GM10248 (cell line): ENCODE measurements at regions of chr3 and their contacts with region 1.

Region 1: GRCh38 chr3:52220380-52221026 is 4.9 kb downstream of the TLR9 start:
- DNase-seq: peak; percentile 85
- CTCF ChIP-seq: peak; percentile 97

Region 2: DNA sequence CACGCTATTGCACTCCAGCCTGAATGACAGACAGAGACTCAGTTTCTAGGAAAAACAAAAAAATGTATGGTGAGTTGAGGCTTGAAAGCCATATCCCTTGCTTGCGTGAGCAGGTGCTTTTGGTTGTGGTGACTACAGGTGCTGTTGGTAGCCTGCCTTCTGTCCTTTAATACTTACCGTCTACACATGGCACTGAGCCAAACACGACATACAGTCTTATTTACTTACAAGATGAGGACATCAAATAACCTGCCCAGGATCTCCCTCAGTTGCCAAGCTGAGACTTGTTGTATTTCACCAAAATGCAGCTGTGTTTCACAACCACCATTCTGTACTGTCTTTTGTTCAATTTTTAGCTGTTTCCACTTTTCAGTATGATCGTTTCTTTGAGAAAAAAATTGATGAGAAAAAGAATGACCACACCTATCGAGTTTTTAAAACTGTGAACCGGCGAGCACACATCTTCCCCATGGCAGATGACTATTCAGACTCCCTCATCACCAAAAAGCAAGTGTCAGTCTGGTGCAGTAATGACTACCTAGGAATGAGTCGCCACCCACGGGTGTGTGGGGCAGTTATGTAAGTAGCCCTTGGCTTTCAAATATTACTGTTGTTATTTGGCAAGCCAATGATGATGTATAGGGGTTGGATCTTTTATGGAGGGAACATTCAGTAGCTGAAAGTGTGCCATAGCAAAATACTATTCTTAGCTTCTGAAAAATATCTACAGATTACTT is 16.0 kb before region 1 on chr3:
- CTCF ChIA-PET with region 1: interaction called, 172 read pairs
- POLR2A ChIA-PET with region 1: no interaction called
- DNase-seq: no peak
- CTCF ChIP-seq: no peak

Region 3: DNA sequence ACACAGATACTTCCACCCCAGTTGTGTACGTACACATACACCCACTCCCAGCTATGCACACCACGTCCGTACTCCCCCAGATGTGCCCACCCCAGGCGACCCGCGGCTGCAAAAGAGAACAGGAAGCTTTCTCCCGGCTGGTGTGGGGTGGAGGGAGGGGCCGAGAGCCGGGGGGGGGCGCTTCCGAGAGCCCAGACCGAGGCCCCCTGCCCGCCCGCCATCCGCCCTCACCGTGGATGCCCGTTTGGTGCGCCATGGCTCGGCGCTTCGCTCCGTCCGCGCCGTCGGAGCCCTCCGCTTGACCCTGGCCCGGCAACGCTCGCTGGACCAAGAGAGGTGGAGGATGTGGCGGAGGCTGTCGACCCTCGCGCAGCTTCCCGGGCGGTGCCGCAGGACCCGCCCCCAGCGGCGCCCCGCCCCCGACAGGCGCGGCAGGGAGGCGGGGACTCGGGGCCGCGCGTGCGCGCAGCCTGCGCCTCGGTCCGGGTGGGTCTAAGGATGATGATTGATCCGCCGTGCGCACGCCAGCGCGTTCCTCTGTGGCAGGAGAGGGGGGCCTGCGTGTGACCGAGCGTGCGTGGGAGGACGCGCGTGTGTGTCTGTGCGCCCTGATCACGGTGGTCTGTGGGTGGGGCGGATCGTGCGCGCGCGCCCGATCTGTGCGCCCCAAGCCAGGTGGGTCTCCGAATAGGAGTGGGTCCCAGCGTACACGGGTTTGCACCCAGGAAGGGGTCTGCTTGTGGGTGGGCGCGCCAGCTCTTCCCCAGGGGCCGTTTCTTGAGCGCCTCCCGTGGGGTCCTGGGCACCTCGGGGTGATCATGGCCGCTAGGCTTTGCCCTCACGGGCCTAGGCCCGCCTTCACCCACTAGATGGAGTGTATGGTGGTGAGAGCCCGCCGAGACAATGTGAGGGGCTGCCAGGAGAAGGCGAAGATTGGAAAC is 18.5 kb after region 1 on chr3 and contains the start of gene TWF2:
- CTCF ChIA-PET with region 1: interaction called, 50 read pairs
- POLR2A ChIA-PET with region 1: no interaction called
- DNase-seq: peak; percentile 97
- CTCF ChIP-seq: peak; percentile 44

Region 4: GRCh38 chr3:52253314-52254304 is 33.1 kb after region 1 on chr3:
- CTCF ChIA-PET with region 1: interaction called, 22 read pairs
- POLR2A ChIA-PET with region 1: no interaction called
- DNase-seq: peak; percentile 91
- CTCF ChIP-seq: no peak

Region 5: DNA sequence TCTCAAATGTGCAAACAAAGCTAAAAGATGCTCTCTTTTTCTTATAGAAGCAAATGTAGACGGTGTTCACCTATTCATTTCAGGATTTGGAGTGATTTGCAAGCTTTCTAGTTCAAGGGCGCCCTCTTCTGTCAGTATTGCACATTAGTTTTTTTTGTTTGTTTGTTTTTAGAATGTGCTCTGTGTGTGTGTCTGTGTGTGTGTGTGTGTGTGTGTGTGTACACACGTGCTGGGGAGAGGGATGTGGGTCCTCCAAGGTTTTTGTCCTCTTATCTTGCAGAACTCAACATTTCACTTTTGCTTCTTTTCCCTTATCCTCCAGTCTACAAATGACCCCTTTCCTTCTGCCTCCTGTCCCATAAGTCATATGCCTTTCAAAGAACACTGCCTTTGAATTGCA is 119.1 kb after region 1 on chr3:
- CTCF ChIA-PET with region 1: interaction called, 140 read pairs
- POLR2A ChIA-PET with region 1: no interaction called
- DNase-seq: peak; percentile 70
- CTCF ChIP-seq: peak; percentile 62

Region 6: GRCh38 chr3:52385157-52385556 is 164.7 kb after region 1 on chr3:
- CTCF ChIA-PET with region 1: interaction called, 10 read pairs
- POLR2A ChIA-PET with region 1: no interaction called
- DNase-seq: peak; percentile 75
- CTCF ChIP-seq: peak; percentile 50

Region 7: DNA sequence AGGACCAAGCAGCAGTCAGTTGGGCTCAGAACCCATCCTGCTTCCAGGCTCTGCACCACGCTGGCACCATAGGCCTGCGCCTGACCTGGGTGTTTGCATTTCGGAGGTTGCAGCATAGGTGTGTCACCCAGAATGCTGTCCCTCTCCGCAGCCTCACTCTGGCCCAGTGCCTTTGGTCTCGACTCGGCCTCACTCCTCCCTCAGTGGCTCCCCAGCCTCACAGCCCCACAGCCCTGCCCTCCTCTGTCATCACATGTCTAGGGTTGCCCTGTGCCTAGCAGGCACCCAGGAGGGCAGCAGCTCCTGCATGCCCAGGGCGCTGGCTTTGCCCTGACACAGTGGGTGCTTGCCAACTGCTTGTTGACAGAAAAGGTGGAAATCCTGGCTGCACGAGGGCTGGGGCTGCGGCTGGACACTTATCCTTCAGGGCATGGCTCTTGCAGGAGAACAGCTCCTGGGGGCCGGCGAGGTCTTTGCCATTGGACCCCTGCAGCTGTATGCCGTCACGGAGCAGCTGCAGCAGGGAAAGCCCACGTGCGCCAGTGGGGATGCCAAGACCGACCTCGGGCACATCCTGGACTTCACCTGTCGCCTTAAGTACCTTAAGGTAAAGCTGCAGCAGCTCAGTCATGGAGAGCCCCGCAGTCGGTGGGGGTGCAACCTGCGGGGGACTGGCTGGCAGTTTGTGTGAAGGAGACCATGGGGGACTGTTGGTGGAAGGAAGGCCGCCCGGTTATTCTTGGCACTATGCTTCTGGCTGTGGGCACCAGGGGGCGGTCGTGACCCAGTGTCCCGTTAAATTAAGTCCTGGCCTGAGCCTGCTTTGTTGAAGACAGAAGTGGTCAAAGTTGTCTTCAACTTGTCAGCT is 251.1 kb after region 1 on chr3:
- CTCF ChIA-PET with region 1: no interaction called
- POLR2A ChIA-PET with region 1: no interaction called
- DNase-seq: peak; percentile 67
- CTCF ChIP-seq: peak; percentile 78

Region 8: DNA sequence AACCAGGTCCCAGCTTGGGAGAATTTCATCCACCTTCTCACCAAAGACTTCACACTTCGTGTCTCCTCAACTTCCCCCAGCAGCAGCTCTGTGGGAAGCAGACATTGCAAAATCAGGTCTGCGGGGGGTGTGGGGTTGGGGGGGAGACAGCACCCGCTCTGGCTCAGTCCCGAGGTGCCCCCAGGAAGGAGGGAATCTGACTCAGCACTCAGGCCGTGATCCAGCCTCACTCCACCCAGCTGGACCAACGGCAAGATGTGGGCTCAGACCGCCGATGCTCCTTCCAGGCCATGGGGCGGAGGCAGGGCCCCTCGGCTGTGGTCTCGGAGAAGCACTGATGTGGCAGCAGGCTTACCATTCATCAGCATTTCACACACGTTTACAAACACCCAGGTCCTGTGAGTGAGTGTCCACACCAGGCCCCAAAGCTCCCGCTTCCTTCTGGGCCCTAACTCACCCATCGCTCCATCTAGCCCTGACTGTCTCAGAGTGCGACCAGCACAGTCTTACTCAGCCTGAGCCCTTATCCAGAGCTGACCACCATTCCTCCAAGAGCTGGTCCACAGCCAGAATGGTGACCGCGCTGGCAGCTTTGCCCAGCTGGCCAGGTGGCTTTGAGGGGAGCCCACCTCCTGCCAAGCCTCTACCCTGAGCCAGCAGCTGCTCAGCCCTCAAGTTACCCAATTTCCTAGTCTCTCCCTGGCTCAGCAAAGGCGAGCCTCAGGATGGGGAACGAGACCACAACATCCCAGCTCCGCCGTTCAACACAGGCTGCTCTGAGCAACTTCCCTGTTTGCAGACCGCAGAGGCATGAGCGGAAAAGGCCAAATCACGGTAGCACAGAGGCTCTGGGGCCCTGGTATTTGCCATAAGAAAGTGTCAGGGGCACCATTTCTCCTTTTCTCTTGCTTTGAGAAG is 277.9 kb after region 1 on chr3:
- CTCF ChIA-PET with region 1: no interaction called
- POLR2A ChIA-PET with region 1: no interaction called
- DNase-seq: no peak
- CTCF ChIP-seq: no peak